ENCODE measurements at regions of chr13 and their contacts with region 1.

Region 1: DNA sequence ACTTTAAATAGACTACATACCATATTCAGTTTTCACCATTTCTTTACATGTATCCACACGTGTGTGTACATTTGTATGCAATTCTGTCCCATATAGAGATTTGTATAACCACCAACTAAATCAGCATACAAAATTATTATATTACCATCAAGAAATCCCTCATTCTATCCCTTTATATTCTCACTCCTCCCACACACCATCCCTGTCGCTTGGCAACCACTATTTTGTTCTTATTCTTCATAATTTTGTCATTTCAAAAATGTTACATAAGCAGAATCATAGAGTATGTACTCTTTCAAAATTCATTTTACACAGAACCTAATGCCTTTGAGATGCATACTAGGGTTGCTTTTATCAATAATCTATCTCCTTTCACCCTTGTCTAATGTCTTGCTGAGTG is 740.5 kb downstream of the SLITRK5 start:
- DNase-seq: no peak
- H3K4me3 ChIP-seq: no peak overlapping the region
- H3K4me3 Mint-ChIP-seq: no peak overlapping the region
- H3K27ac Mint-ChIP-seq: no peak overlapping the region
- H3K4me1 ChIP-seq: no peaks in the 10 kb centered on the region
- H3K4me1 Mint-ChIP-seq: no peaks in the 10 kb centered on the region
- H3K27me3 ChIP-seq: no peaks in the 10 kb centered on the region
- H3K27me3 Mint-ChIP-seq: no peaks in the 10 kb centered on the region
- CTCF ChIP-seq: no peak

Region 2: DNA sequence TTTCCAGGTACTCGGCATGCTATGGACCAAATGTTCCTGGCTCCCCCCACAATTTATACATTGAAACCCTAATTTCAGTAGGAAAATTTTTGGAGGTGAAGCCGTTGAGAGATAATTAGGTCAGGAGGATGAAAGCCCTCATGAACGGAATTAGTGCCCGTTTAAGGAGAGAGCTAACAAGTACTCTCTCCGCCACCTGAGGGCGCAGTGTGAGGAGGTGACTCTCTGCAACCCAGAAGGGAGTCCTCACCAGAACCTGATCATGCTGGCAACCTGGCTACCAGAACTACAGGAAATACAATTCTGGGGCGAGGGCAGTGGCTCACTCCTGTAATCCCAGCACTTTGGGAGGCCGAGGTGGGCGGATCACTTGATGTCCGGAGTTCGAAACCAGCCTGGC is 342.7 kb before region 1 on chr13:
- CTCF ChIA-PET with region 1: no interaction called
- POLR2A ChIA-PET with region 1: no interaction called
- intact Hi-C with region 1: no loop called
- DNase-seq: peak; percentile 54 to 57
- H3K4me3 ChIP-seq: no peak overlapping the region
- H3K4me3 Mint-ChIP-seq: no peak overlapping the region
- H3K27ac Mint-ChIP-seq: no peak overlapping the region
- H3K4me1 ChIP-seq: no peaks in the 10 kb centered on the region
- H3K4me1 Mint-ChIP-seq: no peaks in the 10 kb centered on the region
- H3K27me3 ChIP-seq: no peaks in the 10 kb centered on the region
- H3K27me3 Mint-ChIP-seq: no peaks in the 10 kb centered on the region
- CTCF ChIP-seq: peak; percentile 17 to 34

Region 3: DNA sequence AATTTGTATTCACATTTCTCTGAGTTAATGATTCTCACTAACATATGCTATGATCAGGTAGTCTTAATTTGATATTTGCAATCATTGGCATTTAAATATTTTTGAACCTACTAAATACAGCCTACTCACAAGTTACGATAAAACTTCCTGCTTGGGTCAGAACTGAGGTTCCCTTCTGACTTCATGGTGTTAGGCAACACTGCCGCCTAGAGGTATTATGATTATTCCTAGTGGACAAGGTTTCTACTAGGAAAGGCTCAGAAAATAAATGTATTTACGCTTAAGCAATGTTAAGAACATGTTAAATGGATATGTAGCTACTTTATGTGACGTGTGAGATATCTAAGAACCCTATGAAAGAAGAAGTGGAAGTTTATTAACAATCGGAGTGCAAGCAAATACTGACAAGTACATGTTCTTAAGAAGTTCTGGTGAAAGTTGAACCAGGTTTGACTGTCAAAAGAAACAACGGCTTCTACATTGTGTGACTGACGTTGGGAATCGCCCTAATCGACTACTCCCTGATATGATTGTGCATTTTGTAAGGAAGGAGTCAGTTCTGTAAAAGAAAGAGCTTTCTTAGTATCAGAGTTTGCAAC is 655.3 kb after region 1 on chr13:
- CTCF ChIA-PET with region 1: no interaction called
- POLR2A ChIA-PET with region 1: no interaction called
- intact Hi-C with region 1: loop called (anchors 5 kb)
- DNase-seq: peak; percentile 32 to 61
- H3K4me3 ChIP-seq: no peak overlapping the region
- H3K4me3 Mint-ChIP-seq: no peak overlapping the region
- H3K27ac Mint-ChIP-seq: no peak overlapping the region
- H3K4me1 ChIP-seq: no peaks in the 10 kb centered on the region
- H3K4me1 Mint-ChIP-seq: no peaks in the 10 kb centered on the region
- H3K27me3 ChIP-seq: no peaks in the 10 kb centered on the region
- H3K27me3 Mint-ChIP-seq: no peaks in the 10 kb centered on the region
- CTCF ChIP-seq: peak; percentile 45 to 60